Heart left ventricle (tissue), 16 donors: ENCODE measurements at regions of chr12 and their contacts with region 1.

Region 1: GRCh38 chr12:546921-547845 is 87.4 kb downstream of the B4GALNT3 start:
- DNase-seq: peak; percentile 66 to 85 (median 71)
- ATAC-seq: peak in 3 of 4 donors; percentile 47 to 58 (median 50)
- H3K4me3 ChIP-seq: no peak overlapping the region
- H3K27ac ChIP-seq: peak overlapping the region in 5 of 12 donors; percentile 3 to 83 (median 26)
- H3K4me1 ChIP-seq: peaks cover 0 to 59% (median 21%) of the 10 kb centered on the region in 12 donors
- H3K27me3 ChIP-seq: peaks cover 0 to 13% (median 6%) of the 10 kb centered on the region in 9 donors
- CTCF ChIP-seq: peak; percentile 94 to 98 (median 97)
- POLR2A ChIP-seq: no peak

Region 2: DNA sequence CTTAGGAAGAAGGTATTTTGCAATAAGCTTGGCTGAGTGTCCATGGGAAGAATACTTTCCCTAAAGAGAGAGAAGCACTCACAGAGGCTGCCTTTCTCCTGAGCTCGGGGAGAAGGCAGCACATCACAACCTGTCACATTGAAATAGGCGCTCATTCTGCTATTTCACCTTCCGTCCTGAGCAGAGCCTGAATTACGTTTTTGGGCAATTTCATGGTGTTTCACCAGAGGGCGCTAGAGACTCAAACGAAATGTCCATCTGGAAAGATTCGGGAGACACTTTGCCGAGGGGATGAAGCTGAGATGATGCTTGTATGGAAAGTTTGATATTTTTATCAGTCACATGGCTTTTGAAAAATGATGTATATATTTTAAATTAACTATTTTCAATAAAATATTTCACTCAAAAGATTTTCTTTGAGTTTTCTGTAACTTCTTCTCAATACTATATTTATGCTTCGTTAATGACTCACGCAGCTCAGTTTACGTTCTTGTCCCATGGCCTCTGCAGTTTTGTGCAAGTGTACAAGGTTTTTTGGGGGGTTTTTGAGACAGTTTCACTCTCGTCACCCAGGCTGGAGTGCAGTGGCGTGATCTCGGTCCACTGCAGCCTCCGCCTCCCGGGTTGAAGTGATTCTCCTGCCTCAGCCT is 104.8 kb before region 1 on chr12:
- intact Hi-C with region 1: loop called in 3 of 10 experiments (anchors 2 to 5 kb)
- DNase-seq: peak in 2 of 5 donors; percentile 24 to 42
- ATAC-seq: peak in 2 of 4 donors; percentile 31 to 39
- H3K4me3 ChIP-seq: no peak overlapping the region
- H3K27ac ChIP-seq: no peak overlapping the region
- H3K4me1 ChIP-seq: no peaks in the 10 kb centered on the region
- H3K27me3 ChIP-seq: no peaks in the 10 kb centered on the region
- CTCF ChIP-seq: peak; percentile 63 to 86 (median 77)
- POLR2A ChIP-seq: no peak

Region 3: GRCh38 chr12:452667-453210 is 94.4 kb before region 1 on chr12:
- intact Hi-C with region 1: loop called in 8 of 10 experiments (anchors 2 kb)
- DNase-seq: peak in 3 of 5 donors; percentile 49 to 64 (median 61)
- ATAC-seq: peak in 3 of 4 donors; percentile 19 to 35 (median 32)
- H3K4me3 ChIP-seq: no peak overlapping the region
- H3K27ac ChIP-seq: no peak overlapping the region
- H3K4me1 ChIP-seq: peaks cover 0 to 28% (median 0%) of the 10 kb centered on the region in 12 donors
- H3K27me3 ChIP-seq: peaks cover 0 to 4% (median 0%) of the 10 kb centered on the region in 9 donors
- CTCF ChIP-seq: no peak
- POLR2A ChIP-seq: no peak

Region 4: DNA sequence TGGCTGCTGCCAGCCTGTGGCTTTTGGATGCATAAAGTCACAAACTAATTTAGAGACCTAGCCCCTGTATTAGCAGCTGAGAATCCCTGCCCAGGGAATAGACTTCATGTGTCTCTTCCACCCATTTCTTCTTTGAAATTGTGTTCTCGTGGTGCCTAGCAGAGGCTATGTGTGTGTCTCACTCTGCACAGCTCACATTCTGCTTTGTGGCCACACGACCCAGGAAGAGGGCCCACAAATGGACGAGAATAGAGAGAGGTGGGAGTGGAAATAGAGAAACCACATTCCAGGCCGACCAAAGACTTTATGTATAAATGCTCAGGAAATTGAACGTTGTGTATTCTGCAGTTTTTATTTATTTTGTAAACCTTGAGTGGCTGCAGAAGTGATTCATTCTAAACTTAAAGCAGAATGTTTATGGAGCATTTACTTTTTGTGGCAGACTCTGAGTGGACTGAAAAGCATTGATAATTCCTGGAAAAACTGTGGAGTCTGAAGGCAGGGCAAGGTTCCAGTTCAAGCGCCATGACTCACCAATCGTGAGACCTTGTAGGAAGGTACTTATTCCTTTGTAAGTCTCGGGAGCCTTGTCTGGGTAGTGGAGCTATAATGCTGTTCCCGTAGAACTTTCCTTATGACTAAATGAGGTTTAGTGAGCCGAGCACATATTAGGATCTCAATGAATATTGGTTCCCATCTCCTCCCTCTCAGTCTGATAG is 78.4 kb before region 1 on chr12:
- intact Hi-C with region 1: no loop called
- DNase-seq: no peak
- ATAC-seq: no peak
- H3K4me3 ChIP-seq: no peak overlapping the region
- H3K27ac ChIP-seq: peak overlapping the region in 9 of 12 donors; percentile 45 to 86 (median 81)
- H3K4me1 ChIP-seq: peaks cover 0 to 63% (median 15%) of the 10 kb centered on the region in 12 donors
- H3K27me3 ChIP-seq: peaks cover 0 to 5% (median 0%) of the 10 kb centered on the region in 9 donors
- CTCF ChIP-seq: no peak
- POLR2A ChIP-seq: no peak

Region 5: DNA sequence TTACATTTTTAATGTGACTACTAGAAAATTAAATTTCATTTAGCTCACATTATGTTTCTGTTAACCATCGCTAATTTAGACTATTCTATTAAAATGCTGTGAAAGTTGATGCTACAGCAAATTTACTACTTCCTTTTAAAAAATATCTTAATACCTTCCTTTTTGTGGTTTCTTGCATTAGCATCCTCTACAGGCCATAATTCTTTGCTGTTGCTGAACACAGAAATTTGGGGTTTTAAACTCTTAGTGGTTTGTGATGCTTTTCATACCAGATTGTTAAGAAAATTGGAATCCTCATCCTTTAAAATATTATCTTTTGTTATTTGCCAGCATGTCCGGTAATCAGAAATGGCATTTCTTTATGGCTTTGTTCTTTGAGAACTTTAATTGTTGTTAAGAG is 223.3 kb after region 1 on chr12:
- intact Hi-C with region 1: no loop called
- DNase-seq: no peak
- ATAC-seq: no peak
- H3K4me3 ChIP-seq: no peak overlapping the region
- H3K27ac ChIP-seq: no peak overlapping the region
- H3K4me1 ChIP-seq: peaks cover 2 to 86% (median 46%) of the 10 kb centered on the region in 12 donors
- H3K27me3 ChIP-seq: no peaks in the 10 kb centered on the region
- CTCF ChIP-seq: no peak
- POLR2A ChIP-seq: no peak